AG04449 (cell line): ENCODE measurements at regions of chr17 and their contacts with region 1.

Region 1: GRCh38 chr17:37650419-37651003 is 7.3 kb upstream of the DDX52 start:
- DNase-seq: no peak
- H3K4me3 ChIP-seq: no peak overlapping the region
- CTCF ChIP-seq: peak; percentile 52

Region 2: GRCh38 chr17:37546302-37546701 is 104.2 kb before region 1 on chr17:
- CTCF ChIA-PET with region 1: no interaction called
- POLR2A ChIA-PET with region 1: no interaction called
- DNase-seq: no peak
- H3K4me3 ChIP-seq: no peak overlapping the region
- CTCF ChIP-seq: no peak

Region 3: GRCh38 chr17:37576281-37576680 is 74.2 kb before region 1 on chr17:
- CTCF ChIA-PET with region 1: no interaction called
- POLR2A ChIA-PET with region 1: no interaction called
- DNase-seq: no peak
- H3K4me3 ChIP-seq: no peak overlapping the region
- CTCF ChIP-seq: no peak

Region 4: GRCh38 chr17:37661400-37662014 is 11.0 kb after region 1 on chr17:
- CTCF ChIA-PET with region 1: interaction called, 77 read pairs
- POLR2A ChIA-PET with region 1: no interaction called
- DNase-seq: no peak
- H3K4me3 ChIP-seq: no peak overlapping the region
- CTCF ChIP-seq: no peak

Region 5: GRCh38 chr17:37671824-37672547 is 21.5 kb after region 1 on chr17:
- CTCF ChIA-PET with region 1: interaction called, 26 read pairs
- POLR2A ChIA-PET with region 1: no interaction called
- DNase-seq: peak; percentile 88
- H3K4me3 ChIP-seq: no peak overlapping the region
- CTCF ChIP-seq: no peak

Region 6: GRCh38 chr17:37764383-37764782 is 113.9 kb after region 1 on chr17:
- CTCF ChIA-PET with region 1: interaction called, 146 read pairs
- POLR2A ChIA-PET with region 1: no interaction called
- DNase-seq: no peak
- H3K4me3 ChIP-seq: no peak overlapping the region
- CTCF ChIP-seq: no peak

Region 7: DNA sequence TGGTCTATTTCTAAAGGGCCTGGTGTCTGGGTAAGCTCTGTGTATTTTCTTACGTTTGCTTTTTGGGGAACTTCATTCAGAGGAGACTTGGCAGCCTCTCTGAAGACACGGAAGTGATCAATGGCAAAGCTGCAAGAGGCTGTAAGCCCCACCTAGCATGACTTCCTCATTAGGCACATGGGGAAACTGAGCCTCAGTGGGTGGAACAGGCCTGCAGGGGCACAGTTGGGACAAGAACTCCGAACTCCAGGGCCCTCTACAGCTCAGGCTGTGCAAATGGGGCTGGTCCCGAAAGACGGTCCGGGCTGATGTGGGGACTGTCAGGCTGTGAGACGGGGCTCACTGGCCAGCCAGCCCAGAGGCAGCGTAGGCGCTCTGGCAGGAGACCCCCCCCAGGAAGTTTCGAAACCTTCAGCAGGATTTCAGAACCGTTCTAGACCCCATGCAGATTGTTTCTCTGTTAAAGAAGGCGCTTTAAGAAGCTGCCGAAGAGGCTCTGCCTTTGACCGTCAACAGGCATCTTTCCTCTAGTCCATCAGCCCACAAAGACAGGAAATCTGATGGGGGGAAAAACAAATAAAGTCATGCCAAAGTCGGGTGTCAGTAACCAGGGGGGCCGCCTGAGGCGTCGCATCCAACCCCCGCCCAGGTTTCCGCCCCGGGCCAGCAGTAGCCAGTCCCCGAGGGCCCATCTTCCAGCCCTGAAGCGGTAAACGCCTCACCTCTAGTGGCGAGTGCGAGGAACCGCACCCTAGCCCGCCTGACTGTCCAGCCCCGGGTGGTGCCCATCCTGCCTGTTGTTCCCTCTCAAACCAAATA is 193.9 kb after region 1 on chr17:
- CTCF ChIA-PET with region 1: interaction called, 10 read pairs
- POLR2A ChIA-PET with region 1: no interaction called
- DNase-seq: no peak
- H3K4me3 ChIP-seq: no peak overlapping the region; the same call in 1 of the 2 replicates
- CTCF ChIP-seq: peak; percentile 93